ENCODE measurements at regions of chr1 and their contacts with region 1.

Region 1: GRCh38 chr1:167533851-167534300 is 15.5 kb upstream of the CD247 start:
- DNase-seq: peak; percentile 78
- ATAC-seq: peak; percentile 90
- H3K4me3 Mint-ChIP-seq: no peak overlapping the region
- H3K27ac Mint-ChIP-seq: no peak overlapping the region
- H3K4me1 Mint-ChIP-seq: peaks cover 4% of the 10 kb centered on the region
- H3K27me3 Mint-ChIP-seq: no peaks in the 10 kb centered on the region

Region 2: DNA sequence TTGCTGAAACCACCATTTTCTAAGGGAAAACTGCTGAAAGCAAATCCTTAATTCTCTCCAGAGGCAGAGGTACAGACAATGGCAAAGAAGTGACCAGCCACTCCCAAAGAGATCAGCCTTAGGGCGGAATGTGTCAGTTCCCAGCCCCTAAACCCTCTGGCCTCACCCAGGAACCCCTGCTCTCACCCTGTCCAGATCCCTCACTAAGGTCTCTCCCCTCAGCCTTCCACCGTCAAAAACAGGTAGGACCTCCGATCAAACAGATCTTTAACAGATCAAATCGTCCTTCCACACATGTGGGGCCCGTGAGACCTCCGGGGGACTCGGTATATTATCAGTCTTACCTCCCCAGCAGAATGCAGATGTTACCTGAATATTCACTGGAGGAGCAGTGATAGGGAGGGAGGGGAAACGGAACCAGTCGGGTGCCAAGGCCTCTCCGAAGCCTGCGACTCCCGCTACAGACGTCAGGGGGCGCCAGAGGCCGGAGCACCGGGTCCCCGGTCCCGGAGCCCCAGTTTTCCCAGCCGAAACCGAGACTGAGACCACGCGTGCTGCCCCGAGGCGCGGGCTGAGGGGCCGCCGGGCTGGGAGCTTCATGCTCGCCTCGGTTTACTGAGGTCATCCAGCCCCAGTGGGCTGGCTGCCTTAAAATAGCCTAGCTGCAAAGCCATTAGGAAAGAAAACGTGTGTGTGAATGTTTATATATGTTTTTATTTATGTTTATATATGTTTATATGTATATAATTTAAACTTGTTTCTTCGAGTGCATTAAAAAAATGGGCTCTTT is 467.3 kb before region 1 on chr1:
- CTCF ChIA-PET with region 1: interaction called, 3 read pairs
- POLR2A ChIA-PET with region 1: no interaction called
- intact Hi-C with region 1: loop called (anchors 2 kb)
- DNase-seq: peak; percentile 87
- ATAC-seq: peak; percentile 95
- H3K4me3 Mint-ChIP-seq: no peak overlapping the region
- H3K27ac Mint-ChIP-seq: no peak overlapping the region
- H3K4me1 Mint-ChIP-seq: no peaks in the 10 kb centered on the region
- H3K27me3 Mint-ChIP-seq: no peaks in the 10 kb centered on the region

Region 3: GRCh38 chr1:167270349-167271092 is 263.4 kb before region 1 on chr1:
- CTCF ChIA-PET with region 1: interaction called, 58 read pairs
- POLR2A ChIA-PET with region 1: no interaction called
- intact Hi-C with region 1: loop called (anchors 1 kb)
- DNase-seq: no peak
- ATAC-seq: no peak
- H3K4me3 Mint-ChIP-seq: no peak overlapping the region
- H3K27ac Mint-ChIP-seq: no peak overlapping the region
- H3K4me1 Mint-ChIP-seq: peaks cover 41% of the 10 kb centered on the region
- H3K27me3 Mint-ChIP-seq: no peaks in the 10 kb centered on the region

Region 4: DNA sequence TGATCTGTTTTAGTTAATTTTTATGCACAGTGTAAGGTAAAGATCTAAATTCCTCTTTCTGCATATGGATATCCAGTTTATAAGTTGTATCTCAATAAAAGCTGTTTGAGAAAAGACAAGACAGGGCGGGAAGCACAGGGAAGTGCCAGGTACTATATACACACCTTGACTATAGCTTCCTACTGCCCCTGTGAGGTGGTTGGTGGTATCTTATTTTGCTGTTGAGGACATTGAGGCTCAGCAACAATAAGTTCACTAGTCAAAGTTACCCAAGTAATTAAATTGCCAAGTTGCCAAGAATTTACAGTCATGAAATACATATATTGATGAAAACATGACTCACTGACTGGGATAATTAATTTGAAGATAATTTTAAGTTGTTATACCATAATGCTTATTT is 124.7 kb before region 1 on chr1:
- CTCF ChIA-PET with region 1: interaction called, 41 read pairs
- POLR2A ChIA-PET with region 1: no interaction called
- intact Hi-C with region 1: no loop called
- DNase-seq: no peak
- ATAC-seq: no peak
- H3K4me3 Mint-ChIP-seq: no peak overlapping the region
- H3K27ac Mint-ChIP-seq: no peak overlapping the region
- H3K4me1 Mint-ChIP-seq: peaks cover 19% of the 10 kb centered on the region
- H3K27me3 Mint-ChIP-seq: no peaks in the 10 kb centered on the region

Region 5: DNA sequence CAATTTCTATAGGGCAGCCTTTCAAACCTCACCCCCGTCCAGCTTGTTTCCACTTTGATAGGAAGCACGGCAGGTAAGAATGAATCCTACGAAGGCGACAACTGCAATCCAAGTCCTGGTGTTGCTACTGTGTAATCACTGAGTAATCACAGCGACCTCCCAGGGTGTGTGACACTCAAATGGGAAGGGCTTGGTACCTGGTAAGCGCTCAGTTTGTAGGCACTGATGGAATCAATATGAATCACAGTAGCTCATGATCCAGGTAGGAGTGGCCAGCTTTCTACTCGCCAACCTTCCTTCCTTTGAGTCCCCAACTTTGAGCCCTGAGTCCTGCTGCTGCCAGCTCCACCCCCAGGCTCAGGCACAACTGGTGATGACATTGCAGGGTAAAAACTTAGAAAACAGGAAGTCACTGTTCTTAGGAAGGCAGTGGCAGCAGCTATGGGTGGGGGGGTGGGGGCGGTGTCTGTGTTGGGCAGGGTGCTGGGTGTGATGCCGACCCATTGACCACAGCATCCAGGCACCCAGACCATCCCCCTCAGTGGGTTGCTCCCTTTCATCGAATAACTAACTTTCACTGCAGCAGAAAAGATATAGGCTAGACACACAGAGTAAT is 86.2 kb before region 1 on chr1:
- CTCF ChIA-PET with region 1: interaction called, 13 read pairs
- POLR2A ChIA-PET with region 1: interaction called, 4 read pairs
- intact Hi-C with region 1: loop called in 1 of 2 experiments (anchors 1 kb)
- DNase-seq: peak; percentile 87
- ATAC-seq: peak; percentile 86
- H3K4me3 Mint-ChIP-seq: peak overlapping the region; percentile 56
- H3K27ac Mint-ChIP-seq: peak overlapping the region; percentile 94
- H3K4me1 Mint-ChIP-seq: peaks cover 86% of the 10 kb centered on the region
- H3K27me3 Mint-ChIP-seq: no peaks in the 10 kb centered on the region

Region 6: GRCh38 chr1:167512046-167512654 is 21.7 kb before region 1 on chr1:
- CTCF ChIA-PET with region 1: interaction called, 90 read pairs
- POLR2A ChIA-PET with region 1: no interaction called
- intact Hi-C with region 1: no loop called
- DNase-seq: peak; percentile 45
- ATAC-seq: peak; percentile 28
- H3K4me3 Mint-ChIP-seq: peak overlapping the region; percentile 68
- H3K27ac Mint-ChIP-seq: peak overlapping the region; percentile 73
- H3K4me1 Mint-ChIP-seq: peaks cover 77% of the 10 kb centered on the region
- H3K27me3 Mint-ChIP-seq: no peaks in the 10 kb centered on the region

Region 7: DNA sequence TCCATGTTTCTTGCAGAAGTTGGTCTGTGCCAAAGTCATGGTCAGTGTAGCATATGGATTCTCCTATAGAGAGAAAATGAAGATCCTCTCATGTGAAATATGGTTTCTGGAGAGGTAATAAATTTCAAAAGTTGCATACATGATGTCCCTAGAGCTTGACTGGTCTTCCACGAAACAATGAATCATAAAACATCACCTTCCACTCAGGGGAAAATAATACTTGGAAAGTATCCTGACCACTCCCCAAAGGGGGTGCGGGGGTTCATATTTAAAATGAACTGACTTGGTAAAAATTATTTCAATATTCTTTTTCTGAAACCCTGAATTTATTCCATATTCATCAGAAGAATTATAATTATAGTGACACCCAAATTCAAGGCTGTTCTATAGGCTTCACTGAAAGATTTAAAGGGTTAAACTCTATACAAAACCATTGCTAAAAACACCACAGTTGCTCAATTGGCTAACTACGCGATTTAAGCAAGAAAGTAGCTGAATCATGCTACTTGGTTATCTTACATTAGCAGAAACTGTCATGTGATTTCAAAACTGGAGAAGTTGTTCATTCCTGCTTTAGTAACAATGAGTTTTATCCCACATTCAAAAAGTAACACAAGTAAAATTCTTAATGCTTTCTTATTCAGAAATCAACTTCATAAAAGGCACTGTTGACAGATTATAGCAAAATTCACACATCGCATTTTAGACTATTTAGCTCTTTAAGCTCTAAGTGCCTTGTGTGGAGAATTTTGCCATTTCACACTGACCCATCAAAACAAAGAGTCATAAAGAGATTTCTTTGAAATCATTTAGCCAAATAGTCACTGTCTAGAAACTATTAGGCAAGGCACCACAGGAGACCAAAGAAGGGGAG is 14.4 kb after region 1 on chr1:
- CTCF ChIA-PET with region 1: interaction called, 16 read pairs
- POLR2A ChIA-PET with region 1: interaction called, 4 read pairs
- intact Hi-C with region 1: no loop called
- DNase-seq: no peak
- ATAC-seq: no peak
- H3K4me3 Mint-ChIP-seq: no peak overlapping the region
- H3K27ac Mint-ChIP-seq: no peak overlapping the region
- H3K4me1 Mint-ChIP-seq: peaks cover 30% of the 10 kb centered on the region
- H3K27me3 Mint-ChIP-seq: no peaks in the 10 kb centered on the region

Region 8: GRCh38 chr1:168092566-168093355 is 558.9 kb after region 1 on chr1:
- CTCF ChIA-PET with region 1: no interaction called
- POLR2A ChIA-PET with region 1: no interaction called
- intact Hi-C with region 1: no loop called
- DNase-seq: no peak
- ATAC-seq: no peak
- H3K4me3 Mint-ChIP-seq: no peak overlapping the region
- H3K27ac Mint-ChIP-seq: no peak overlapping the region
- H3K4me1 Mint-ChIP-seq: no peaks in the 10 kb centered on the region
- H3K27me3 Mint-ChIP-seq: peaks cover 3% of the 10 kb centered on the region

Measured in activated CD4-positive, alpha-beta T cell treated with anti-CD3 and anti-CD28 coated beads for 36 hours (primary cell).